CD4-positive, alpha-beta T cell (primary cell): ENCODE measurements at regions of chr1 and their contacts with region 1.

Region 1: GRCh38 chr1:27525296-27526272 is 35.6 kb upstream of the WASF2 start:
- DNase-seq: peak in 12 of 14 experiments; percentile 18 to 73 (median 53)
- ATAC-seq: peak; percentile 7
- H3K4me3 ChIP-seq: peak overlapping the region; percentile 45
- H3K4me3 Mint-ChIP-seq: peak overlapping the region; percentile 68
- H3K27ac ChIP-seq: peak overlapping the region; percentile 30 to 75
- H3K27ac Mint-ChIP-seq: peak overlapping the region; percentile 96
- H3K4me1 ChIP-seq: peaks cover 82% of the 10 kb centered on the region
- H3K4me1 Mint-ChIP-seq: peaks cover 85% of the 10 kb centered on the region
- H3K27me3 ChIP-seq: no peaks in the 10 kb centered on the region
- H3K27me3 Mint-ChIP-seq: no peaks in the 10 kb centered on the region
- CTCF ChIP-seq: no peak

Region 2: GRCh38 chr1:27416387-27417111 is 109.0 kb before region 1 on chr1:
- CTCF ChIA-PET with region 1: interaction called, 4 read pairs
- POLR2A ChIA-PET with region 1: interaction called, 7 read pairs
- intact Hi-C with region 1: loop called in 1 of 2 experiments (anchors 5 kb)
- DNase-seq: peak in 10 of 14 experiments; percentile 28 to 81 (median 49)
- ATAC-seq: peak; percentile 73
- H3K4me3 ChIP-seq: no peak overlapping the region
- H3K4me3 Mint-ChIP-seq: no peak overlapping the region
- H3K27ac ChIP-seq: no peak overlapping the region
- H3K27ac Mint-ChIP-seq: peak overlapping the region; percentile 54
- H3K4me1 ChIP-seq: peaks cover 18% of the 10 kb centered on the region
- H3K4me1 Mint-ChIP-seq: peaks cover 46% of the 10 kb centered on the region
- H3K27me3 ChIP-seq: no peaks in the 10 kb centered on the region
- H3K27me3 Mint-ChIP-seq: no peaks in the 10 kb centered on the region
- CTCF ChIP-seq: peak; percentile 60

Region 3: DNA sequence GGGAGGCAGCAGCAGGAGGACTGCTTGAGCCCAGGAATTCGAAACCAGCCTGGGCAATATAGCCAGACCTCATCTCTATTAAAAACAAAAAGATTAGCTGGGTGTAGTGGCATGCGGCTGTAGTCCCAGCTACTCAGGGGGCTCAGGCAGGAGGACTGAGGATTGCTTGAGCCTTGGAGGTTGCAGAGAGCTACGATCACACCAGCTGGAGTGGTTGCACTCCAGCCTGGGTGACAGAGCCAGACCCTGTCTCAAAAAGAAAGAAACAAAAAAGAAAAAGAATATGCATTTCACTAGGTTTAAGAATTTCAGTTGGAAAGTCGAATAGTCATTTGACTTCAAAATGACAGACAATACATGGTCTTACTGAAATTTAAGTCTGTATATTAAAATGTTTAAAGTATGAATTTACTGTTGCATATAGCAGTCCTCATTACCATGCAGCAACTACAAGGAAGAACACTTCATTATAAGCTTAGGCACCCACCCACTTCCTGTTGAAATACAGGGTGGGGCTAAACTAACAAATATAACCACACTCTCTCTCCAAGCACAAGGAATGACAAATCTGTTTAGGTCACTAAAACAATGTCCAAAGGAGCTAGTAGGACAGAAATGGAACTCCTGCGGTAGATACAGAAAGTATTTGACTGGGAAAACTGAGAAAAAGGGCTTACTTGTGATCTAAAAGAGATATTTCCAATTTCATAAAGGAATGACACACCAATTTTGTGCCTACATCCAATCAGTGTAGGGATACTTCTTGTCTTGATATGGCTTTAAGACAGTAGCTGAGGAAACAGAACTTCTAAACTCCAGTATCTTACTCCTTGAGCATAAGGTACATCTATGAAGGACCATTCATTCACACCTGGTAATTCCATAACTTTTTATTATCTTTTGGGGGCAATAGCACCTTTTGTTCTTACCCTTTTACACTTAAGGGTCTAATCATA is 89.1 kb before region 1 on chr1:
- CTCF ChIA-PET with region 1: no interaction called
- POLR2A ChIA-PET with region 1: interaction called, 3 read pairs
- intact Hi-C with region 1: loop called in 1 of 2 experiments (anchors 5 kb)
- DNase-seq: peak in 4 of 14 experiments; percentile 34 to 78 (median 64)
- ATAC-seq: peak; percentile 96
- H3K4me3 ChIP-seq: peak overlapping the region; percentile 21
- H3K4me3 Mint-ChIP-seq: peak overlapping the region; percentile 73
- H3K27ac ChIP-seq: peak overlapping the region; percentile 54 to 65
- H3K27ac Mint-ChIP-seq: peak overlapping the region; percentile 80
- H3K4me1 ChIP-seq: peaks cover 69% of the 10 kb centered on the region
- H3K4me1 Mint-ChIP-seq: peaks cover 75% of the 10 kb centered on the region
- H3K27me3 ChIP-seq: no peaks in the 10 kb centered on the region
- H3K27me3 Mint-ChIP-seq: no peaks in the 10 kb centered on the region
- CTCF ChIP-seq: no peak

Region 4: DNA sequence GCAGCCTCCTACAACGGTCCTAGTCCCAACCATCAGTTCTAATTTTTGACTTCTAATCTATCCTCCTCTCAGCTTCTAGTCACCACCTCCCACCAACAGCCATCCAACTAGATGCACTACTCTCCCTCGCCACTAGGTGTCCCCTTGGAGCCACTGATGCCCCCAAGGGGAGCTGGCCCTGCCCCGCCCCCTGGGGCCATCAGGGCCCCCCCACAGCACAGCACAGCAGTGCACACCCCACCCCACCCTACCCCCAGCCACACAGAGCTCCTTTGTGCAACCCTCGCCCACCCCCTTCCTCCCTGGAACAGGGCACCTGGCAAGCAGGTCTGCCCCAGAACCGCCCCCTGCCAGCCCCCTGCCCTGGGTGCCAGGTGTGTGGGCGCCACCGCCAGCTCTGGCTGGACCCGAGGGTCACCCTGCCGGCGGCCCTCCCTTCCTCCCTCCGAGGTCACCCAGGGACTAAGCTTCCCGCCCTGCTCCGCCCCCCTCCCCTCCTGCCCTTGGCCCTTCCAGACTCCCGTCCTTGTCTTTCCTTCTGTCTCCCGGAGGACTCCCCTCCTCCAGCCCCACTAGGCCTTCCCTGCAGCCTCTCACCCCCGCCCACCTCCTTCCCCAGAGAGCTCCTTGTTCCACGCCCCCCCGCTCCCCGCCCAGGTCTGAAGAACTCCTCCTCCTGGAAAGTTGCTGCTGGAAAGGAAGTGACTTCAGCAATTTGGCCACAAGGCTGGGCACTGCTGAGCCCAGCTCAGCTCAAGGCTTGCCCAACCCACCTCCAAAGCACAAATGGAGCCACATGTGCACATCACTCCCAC is 31.4 kb after region 1 on chr1:
- CTCF ChIA-PET with region 1: interaction called, 31 read pairs
- POLR2A ChIA-PET with region 1: interaction called, 10 read pairs
- intact Hi-C with region 1: no loop called
- DNase-seq: peak; percentile 60 to 86 (median 65)
- ATAC-seq: peak; percentile 90
- H3K4me3 ChIP-seq: no peak overlapping the region
- H3K4me3 Mint-ChIP-seq: peak overlapping the region; percentile 23
- H3K27ac ChIP-seq: no peak overlapping the region
- H3K27ac Mint-ChIP-seq: peak overlapping the region; percentile 50
- H3K4me1 ChIP-seq: peaks cover 28% of the 10 kb centered on the region
- H3K4me1 Mint-ChIP-seq: peaks cover 39% of the 10 kb centered on the region
- H3K27me3 ChIP-seq: no peaks in the 10 kb centered on the region
- H3K27me3 Mint-ChIP-seq: no peaks in the 10 kb centered on the region
- CTCF ChIP-seq: peak; percentile 94

Region 5: GRCh38 chr1:27568300-27569087 is 42.9 kb after region 1 on chr1:
- CTCF ChIA-PET with region 1: interaction called, 9 read pairs
- POLR2A ChIA-PET with region 1: interaction called, 3 read pairs
- intact Hi-C with region 1: loop called (anchors 2 to 5 kb)
- DNase-seq: peak; percentile 84 to 98 (median 92)
- ATAC-seq: peak; percentile 91
- H3K4me3 ChIP-seq: peak overlapping the region; percentile 46
- H3K4me3 Mint-ChIP-seq: peak overlapping the region; percentile 67
- H3K27ac ChIP-seq: peak overlapping the region; percentile 49 to 62
- H3K27ac Mint-ChIP-seq: peak overlapping the region; percentile 74
- H3K4me1 ChIP-seq: peaks cover 31% of the 10 kb centered on the region
- H3K4me1 Mint-ChIP-seq: peaks cover 60% of the 10 kb centered on the region
- H3K27me3 ChIP-seq: no peaks in the 10 kb centered on the region
- H3K27me3 Mint-ChIP-seq: no peaks in the 10 kb centered on the region
- CTCF ChIP-seq: peak; percentile 68

Region 6: GRCh38 chr1:27832762-27833161 is 307.2 kb after region 1 on chr1:
- CTCF ChIA-PET with region 1: no interaction called
- POLR2A ChIA-PET with region 1: no interaction called
- intact Hi-C with region 1: no loop called
- DNase-seq: no peak
- ATAC-seq: no peak
- H3K4me3 ChIP-seq: no peak overlapping the region
- H3K4me3 Mint-ChIP-seq: peak overlapping the region; percentile 96
- H3K27ac ChIP-seq: no peak overlapping the region
- H3K27ac Mint-ChIP-seq: peak overlapping the region; percentile 93
- H3K4me1 ChIP-seq: peaks cover 27% of the 10 kb centered on the region
- H3K4me1 Mint-ChIP-seq: peaks cover 50% of the 10 kb centered on the region
- H3K27me3 ChIP-seq: no peaks in the 10 kb centered on the region
- H3K27me3 Mint-ChIP-seq: no peaks in the 10 kb centered on the region
- CTCF ChIP-seq: no peak